ENCODE measurements at regions of chr18 and their contacts with region 1.

Region 1: DNA sequence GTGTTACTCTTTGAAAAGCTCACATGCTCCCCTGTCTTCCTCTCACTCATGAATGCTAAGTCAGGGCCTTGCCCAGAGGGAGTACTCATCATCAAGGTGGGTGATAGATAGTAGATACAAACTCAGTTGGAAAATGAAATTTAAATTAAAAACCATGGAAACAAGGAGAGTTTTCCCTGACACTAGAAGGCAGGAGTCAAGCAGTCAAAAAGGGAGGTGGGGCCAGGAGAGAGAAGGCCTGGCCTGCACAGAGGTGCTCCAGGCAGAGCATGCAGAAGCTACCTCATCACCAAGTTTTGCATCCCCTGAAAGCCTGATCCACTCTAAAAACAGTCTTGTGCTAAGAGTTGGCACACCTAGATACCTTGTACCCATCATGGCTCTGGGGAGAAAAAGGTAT is 143.7 kb downstream of the MYO5B start:
- DNase-seq: no peak
- H3K4me3 ChIP-seq: no peak overlapping the region
- CTCF ChIP-seq: peak; percentile 5

Region 2: DNA sequence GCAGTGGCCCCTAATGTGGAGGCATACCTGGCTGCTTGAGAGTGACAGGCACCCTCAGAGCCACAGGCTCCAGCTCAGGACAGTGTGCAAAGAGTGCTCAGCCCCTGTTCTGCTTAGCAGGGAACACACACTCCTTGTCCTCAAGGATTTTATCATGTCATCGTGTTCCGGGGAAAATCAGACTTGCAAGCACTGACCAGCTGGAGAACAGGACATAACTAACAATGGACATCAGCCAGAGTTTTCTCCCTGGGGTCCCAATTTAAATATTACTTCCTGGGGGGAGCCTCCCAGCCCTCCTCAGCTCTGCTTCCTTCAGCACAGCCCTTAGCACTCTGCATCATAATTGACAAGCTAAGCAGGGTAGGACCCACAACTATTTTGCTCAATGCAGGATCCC is 62.6 kb before region 1 on chr18:
- in situ Hi-C with region 1: loop called (anchors 5 kb)
- DNase-seq: no peak
- H3K4me3 ChIP-seq: no peak overlapping the region
- CTCF ChIP-seq: no peak